KBM-7 (cell line): ENCODE measurements at regions of chr20 and their contacts with region 1.

Region 1: GRCh38 chr20:62025832-62026563 is 39.7 kb downstream of the TAF4 start:
- DNase-seq: peak; percentile 92

Region 2: GRCh38 chr20:61370841-61371303 is 655.1 kb before region 1 on chr20:
- in situ Hi-C with region 1: no loop called
- DNase-seq: no peak

Region 3: GRCh38 chr20:62143118-62143973 is 117.3 kb after region 1 on chr20 and contains the starts of genes PSMA7 and SS18L1:
- in situ Hi-C with region 1: loop called (anchors 10 kb)
- DNase-seq: peak; percentile 84